ENCODE measurements at regions of chr2 and their contacts with region 1.

Region 1: GRCh38 chr2:20051532-20052228 is at the start of gene LAPTM4A:
- DNase-seq: peak; percentile 98
- H3K4me3 Mint-ChIP-seq: no peak within 1 kb of the TSS
- H3K27ac Mint-ChIP-seq: no peak within 1 kb of the TSS
- H3K4me1 Mint-ChIP-seq: peaks cover 25% of the 10 kb centered on the region
- H3K27me3 Mint-ChIP-seq: peaks cover 8% of the 10 kb centered on the region
- total RNA-seq, gene LAPTM4A: 23.4 to 24.4 TPM

Region 2: GRCh38 chr2:19347619-19348562 is 703.8 kb before region 1 on chr2:
- CTCF ChIA-PET with region 1: no interaction called
- intact Hi-C with region 1: loop called (anchors 1 kb)
- DNase-seq: peak; percentile 94
- H3K4me3 Mint-ChIP-seq: peak overlapping the region; percentile 95
- H3K27ac Mint-ChIP-seq: peak overlapping the region; percentile 96
- H3K4me1 Mint-ChIP-seq: peaks cover 26% of the 10 kb centered on the region
- H3K27me3 Mint-ChIP-seq: peaks cover 37% of the 10 kb centered on the region

Region 3: GRCh38 chr2:19989681-19990415 is 61.8 kb before region 1 on chr2 and contains the start of gene WDR35:
- CTCF ChIA-PET with region 1: no interaction called
- intact Hi-C with region 1: loop called (anchors 1 kb)
- DNase-seq: peak; percentile 91
- H3K4me3 Mint-ChIP-seq: peak within 1 kb of the TSS; percentile 87
- H3K27ac Mint-ChIP-seq: peak within 1 kb of the TSS; percentile 54
- H3K4me1 Mint-ChIP-seq: peaks cover 28% of the 10 kb centered on the region
- H3K27me3 Mint-ChIP-seq: peaks cover 13% of the 10 kb centered on the region
- total RNA-seq, gene WDR35: 4.3 to 4.4 TPM

Region 4: DNA sequence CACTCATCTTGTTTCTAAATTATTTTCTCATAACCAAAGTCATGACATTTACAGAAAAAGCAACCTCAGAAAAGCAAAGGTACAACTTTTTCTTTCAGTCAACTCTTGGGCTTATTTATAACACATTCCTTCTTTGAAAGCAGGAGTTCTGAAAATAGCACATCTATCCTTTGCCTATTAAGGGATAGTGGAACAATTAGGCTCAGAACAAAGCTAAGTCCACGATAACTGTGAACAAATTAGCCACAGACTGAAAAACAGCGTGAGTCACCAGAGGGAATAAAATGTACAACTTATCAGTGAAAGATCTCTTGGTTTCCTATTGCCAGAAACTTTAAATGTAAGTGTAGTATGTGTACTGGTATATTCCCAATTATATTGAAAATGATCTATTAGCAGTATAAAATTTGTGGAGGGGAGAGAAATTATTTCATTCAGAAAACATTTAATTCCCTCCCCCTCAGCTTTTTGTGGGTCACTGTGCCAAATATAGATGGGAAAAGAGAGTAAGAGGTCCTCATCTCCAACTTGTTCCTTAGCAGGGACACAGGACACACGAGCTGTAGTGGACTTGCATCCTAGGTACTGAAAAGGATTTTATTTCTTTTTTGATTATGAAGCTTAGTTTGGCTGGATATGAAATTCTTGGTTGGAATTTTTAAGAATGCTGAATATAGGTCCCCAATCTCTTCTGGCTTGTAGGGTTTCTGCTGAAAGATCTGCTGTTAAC is 23.8 kb before region 1 on chr2:
- CTCF ChIA-PET with region 1: no interaction called
- intact Hi-C with region 1: no loop called
- DNase-seq: no peak
- H3K4me3 Mint-ChIP-seq: no peak overlapping the region
- H3K27ac Mint-ChIP-seq: no peak overlapping the region
- H3K4me1 Mint-ChIP-seq: no peaks in the 10 kb centered on the region
- H3K27me3 Mint-ChIP-seq: no peaks in the 10 kb centered on the region

Region 5: GRCh38 chr2:20097879-20098714 is 46.4 kb after region 1 on chr2:
- CTCF ChIA-PET with region 1: interaction called, 3 read pairs
- intact Hi-C with region 1: loop called (anchors 1 kb)
- DNase-seq: peak; percentile 88
- H3K4me3 Mint-ChIP-seq: no peak overlapping the region
- H3K27ac Mint-ChIP-seq: no peak overlapping the region
- H3K4me1 Mint-ChIP-seq: peaks cover 3% of the 10 kb centered on the region
- H3K27me3 Mint-ChIP-seq: peaks cover 10% of the 10 kb centered on the region

Region 6: GRCh38 chr2:20113980-20114954 is 62.6 kb after region 1 on chr2:
- CTCF ChIA-PET with region 1: no interaction called
- intact Hi-C with region 1: no loop called
- DNase-seq: no peak
- H3K4me3 Mint-ChIP-seq: no peak overlapping the region
- H3K27ac Mint-ChIP-seq: no peak overlapping the region
- H3K4me1 Mint-ChIP-seq: no peaks in the 10 kb centered on the region
- H3K27me3 Mint-ChIP-seq: peaks cover 2% of the 10 kb centered on the region

Region 7: GRCh38 chr2:20446917-20447436 is 395.3 kb after region 1 on chr2 and contains the start of gene RHOB:
- CTCF ChIA-PET with region 1: no interaction called
- intact Hi-C with region 1: loop called (anchors 2 kb)
- DNase-seq: peak; percentile 91
- H3K4me3 Mint-ChIP-seq: peak within 1 kb of the TSS; percentile 76
- H3K27ac Mint-ChIP-seq: no peak within 1 kb of the TSS
- H3K4me1 Mint-ChIP-seq: peaks cover 11% of the 10 kb centered on the region
- H3K27me3 Mint-ChIP-seq: peaks cover 3% of the 10 kb centered on the region
- total RNA-seq, gene RHOB: 1.8 to 2.0 TPM

Measured in activated naive CD4-positive, alpha-beta T cell treated with anti-CD3 and anti-CD28 coated beads for 36 hours (primary cell).